ENCODE measurements at regions of chr1 and their contacts with region 1.

Region 1: GRCh38 chr1:25782608-25783201 is 17.3 kb upstream of the SELENON start:
- DNase-seq: no peak
- ATAC-seq: no peak

Region 2: DNA sequence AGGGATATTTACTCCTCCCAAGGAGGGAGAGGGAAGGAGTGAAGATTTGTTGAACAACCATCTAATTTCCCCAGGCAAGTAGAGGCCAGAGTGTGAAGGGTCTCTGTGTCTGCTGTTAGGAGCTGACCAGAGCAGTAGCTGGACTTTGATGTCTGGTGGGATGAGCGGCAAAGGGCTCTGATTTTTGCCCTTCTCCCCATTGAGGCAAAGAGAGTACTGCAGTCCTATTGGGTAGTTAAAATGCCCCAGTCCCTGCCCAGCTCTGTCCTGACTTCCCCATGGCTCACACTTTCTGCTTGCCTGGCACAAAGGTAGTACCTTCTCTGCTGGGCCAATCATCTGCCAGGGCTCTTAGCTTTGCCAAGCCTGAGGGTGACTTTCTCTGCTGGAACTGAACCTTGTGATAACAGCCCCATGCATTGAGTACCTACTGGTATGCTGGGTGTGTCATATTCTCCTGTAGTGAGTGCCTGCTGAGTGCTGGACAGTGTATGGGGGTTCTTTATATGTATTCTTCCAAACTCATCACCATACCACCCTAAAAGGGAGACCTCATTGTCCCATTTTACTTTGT is 46.7 kb before region 1 on chr1:
- intact Hi-C with region 1: loop called (anchors 1 kb)
- DNase-seq: peak; percentile 32
- ATAC-seq: no peak